ENCODE measurements at regions of chr10 and their contacts with region 1.

Region 1: GRCh38 chr10:16856567-16856966 is 39.3 kb upstream of the RSU1 start:
- DNase-seq: no peak

Region 2: GRCh38 chr10:16752099-16752498 is 104.5 kb before region 1 on chr10:
- intact Hi-C with region 1: no loop called
- DNase-seq: no peak

Region 3: DNA sequence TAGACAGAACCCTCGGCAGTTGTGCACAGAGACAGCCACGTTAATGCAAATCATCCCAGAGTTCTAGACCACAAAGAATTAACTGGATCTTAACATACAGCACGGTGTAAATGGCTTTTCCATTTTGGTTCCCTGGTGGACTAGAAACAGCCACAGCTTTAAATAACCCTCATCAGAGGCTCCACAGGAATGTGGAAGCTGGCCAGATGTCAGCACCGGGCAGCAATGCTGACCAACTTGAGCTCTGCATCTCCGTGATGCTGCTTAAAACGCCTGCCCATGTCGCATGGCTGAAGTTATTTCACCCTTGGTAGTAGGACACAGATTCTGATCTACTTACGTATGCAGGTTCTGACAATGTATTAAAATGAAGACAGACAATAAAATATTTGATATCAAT is 63.9 kb before region 1 on chr10:
- intact Hi-C with region 1: no loop called
- DNase-seq: no peak

Region 4: GRCh38 chr10:16950656-16951601 is 94.4 kb after region 1 on chr10:
- intact Hi-C with region 1: loop called (anchors 5 kb)
- DNase-seq: no peak

Region 5: GRCh38 chr10:17062955-17063484 is 206.5 kb after region 1 on chr10:
- intact Hi-C with region 1: no loop called
- DNase-seq: no peak